ENCODE measurements at regions of chr7 and their contacts with region 1.

Region 1: DNA sequence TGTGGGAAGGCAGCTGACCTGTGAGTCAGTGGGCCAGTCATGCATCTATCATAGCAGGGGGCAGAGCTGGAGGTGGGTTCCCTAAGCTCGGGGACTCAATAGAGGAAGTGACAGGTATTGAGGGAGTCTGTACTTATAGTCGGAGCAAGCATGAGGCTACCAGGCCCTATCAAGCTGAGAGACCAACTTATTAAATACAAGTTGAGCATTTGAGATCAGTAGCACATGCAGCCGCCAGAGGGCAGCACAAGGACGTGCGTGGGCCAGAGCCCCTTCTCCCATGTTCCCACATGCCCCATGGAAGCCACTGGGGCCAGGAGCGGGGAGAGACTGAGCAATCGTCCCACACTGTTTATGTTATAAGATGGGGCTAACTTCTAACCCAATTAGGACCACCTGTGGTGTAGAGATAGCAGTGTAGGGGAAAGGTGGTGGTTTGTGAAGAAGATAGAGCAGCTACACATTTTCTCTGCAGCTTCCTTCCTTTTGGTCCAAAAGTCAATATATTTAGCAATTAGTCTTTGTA is 13.0 kb upstream of the STK31 start:
- DNase-seq: peak in 8 of 9 experiments; percentile 28 to 71 (median 60)
- ATAC-seq: peak; percentile 65
- H3K4me3 ChIP-seq: no peak overlapping the region
- H3K4me3 Mint-ChIP-seq: no peak overlapping the region
- H3K27ac ChIP-seq: no peak overlapping the region
- H3K27ac Mint-ChIP-seq: no peak overlapping the region
- H3K4me1 ChIP-seq: no peaks in the 10 kb centered on the region
- H3K4me1 Mint-ChIP-seq: no peaks in the 10 kb centered on the region
- H3K27me3 ChIP-seq: no peaks in the 10 kb centered on the region
- H3K27me3 Mint-ChIP-seq: no peaks in the 10 kb centered on the region
- CTCF ChIP-seq: peak; percentile 64

Region 2: GRCh38 chr7:22827563-22827962 is 869.4 kb before region 1 on chr7:
- CTCF ChIA-PET with region 1: no interaction called
- POLR2A ChIA-PET with region 1: no interaction called
- intact Hi-C with region 1: no loop called
- DNase-seq: peak in 1 of 9 experiments; percentile 18
- ATAC-seq: no peak
- H3K4me3 ChIP-seq: no peak overlapping the region
- H3K4me3 Mint-ChIP-seq: no peak overlapping the region
- H3K27ac ChIP-seq: no peak overlapping the region
- H3K27ac Mint-ChIP-seq: no peak overlapping the region
- H3K4me1 ChIP-seq: no peaks in the 10 kb centered on the region
- H3K4me1 Mint-ChIP-seq: peaks cover 6% of the 10 kb centered on the region
- H3K27me3 ChIP-seq: no peaks in the 10 kb centered on the region
- H3K27me3 Mint-ChIP-seq: peaks cover 7% of the 10 kb centered on the region
- CTCF ChIP-seq: no peak

Region 3: DNA sequence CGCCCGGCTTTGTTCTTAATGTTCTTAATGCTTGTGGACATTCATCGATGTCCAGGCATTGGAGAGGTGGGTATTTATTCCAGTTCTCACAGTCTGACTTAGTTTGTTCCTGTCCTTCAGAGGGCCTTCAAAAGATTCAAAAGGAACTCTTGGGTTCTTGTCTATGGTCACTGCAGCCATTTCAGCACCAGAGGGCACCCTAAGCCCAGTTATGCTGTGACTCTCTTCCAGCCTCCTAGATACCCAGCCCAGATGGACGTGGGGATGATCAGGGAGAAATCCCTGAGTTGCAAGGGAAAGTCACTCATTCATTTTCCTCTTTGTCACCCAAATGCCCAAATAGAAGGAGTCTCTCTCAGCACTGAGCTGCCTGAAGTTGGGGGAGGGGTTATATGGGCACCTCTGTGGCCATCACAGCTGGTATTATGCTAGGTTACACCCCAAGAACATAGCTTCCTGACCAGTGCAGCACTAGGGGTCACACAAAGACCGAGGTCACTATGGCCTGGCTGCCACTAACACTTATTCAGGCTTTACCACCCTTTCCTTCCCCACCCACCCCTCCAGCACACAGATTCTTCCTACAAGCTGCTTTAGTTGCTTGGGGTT is 126.3 kb before region 1 on chr7:
- CTCF ChIA-PET with region 1: interaction called, 11 read pairs
- POLR2A ChIA-PET with region 1: no interaction called
- intact Hi-C with region 1: no loop called
- DNase-seq: peak; percentile 40 to 81 (median 66)
- ATAC-seq: peak; percentile 83
- H3K4me3 ChIP-seq: no peak overlapping the region
- H3K4me3 Mint-ChIP-seq: no peak overlapping the region
- H3K27ac ChIP-seq: no peak overlapping the region
- H3K27ac Mint-ChIP-seq: no peak overlapping the region
- H3K4me1 ChIP-seq: no peaks in the 10 kb centered on the region
- H3K4me1 Mint-ChIP-seq: no peaks in the 10 kb centered on the region
- H3K27me3 ChIP-seq: no peaks in the 10 kb centered on the region
- H3K27me3 Mint-ChIP-seq: peaks cover 16% of the 10 kb centered on the region
- CTCF ChIP-seq: peak; percentile 67

Region 4: DNA sequence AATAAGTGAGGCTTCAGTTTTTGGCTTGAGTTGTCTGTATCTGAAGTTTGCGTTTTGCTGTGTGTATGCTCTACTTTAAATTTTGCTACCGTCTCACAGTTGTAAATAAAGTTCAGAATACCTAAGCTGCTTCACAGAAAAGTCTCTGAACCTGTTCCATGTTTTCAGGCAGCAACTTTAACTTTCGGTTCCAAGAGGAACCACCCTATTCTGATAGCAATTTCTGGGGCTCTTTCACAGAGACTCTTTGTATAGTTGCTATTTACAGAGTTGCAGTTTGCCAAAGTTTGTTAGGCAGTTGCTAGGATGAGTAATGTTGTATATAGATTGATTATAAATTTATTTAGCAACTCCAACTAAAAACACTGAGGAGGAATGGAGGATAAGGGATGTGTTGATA is 11.2 kb before region 1 on chr7:
- CTCF ChIA-PET with region 1: interaction called, 13 read pairs
- POLR2A ChIA-PET with region 1: interaction called, 5 read pairs
- intact Hi-C with region 1: no loop called
- DNase-seq: no peak
- ATAC-seq: no peak
- H3K4me3 ChIP-seq: no peak overlapping the region
- H3K4me3 Mint-ChIP-seq: no peak overlapping the region
- H3K27ac ChIP-seq: no peak overlapping the region
- H3K27ac Mint-ChIP-seq: peak overlapping the region; percentile 37
- H3K4me1 ChIP-seq: peaks cover 3% of the 10 kb centered on the region
- H3K4me1 Mint-ChIP-seq: peaks cover 11% of the 10 kb centered on the region
- H3K27me3 ChIP-seq: no peaks in the 10 kb centered on the region
- H3K27me3 Mint-ChIP-seq: no peaks in the 10 kb centered on the region
- CTCF ChIP-seq: no peak

Region 5: GRCh38 chr7:23717788-23718187 is 20.8 kb after region 1 on chr7:
- CTCF ChIA-PET with region 1: interaction called, 58 read pairs
- POLR2A ChIA-PET with region 1: no interaction called
- intact Hi-C with region 1: no loop called
- DNase-seq: no peak
- ATAC-seq: no peak
- H3K4me3 ChIP-seq: no peak overlapping the region
- H3K4me3 Mint-ChIP-seq: no peak overlapping the region
- H3K27ac ChIP-seq: no peak overlapping the region
- H3K27ac Mint-ChIP-seq: no peak overlapping the region
- H3K4me1 ChIP-seq: no peaks in the 10 kb centered on the region
- H3K4me1 Mint-ChIP-seq: no peaks in the 10 kb centered on the region
- H3K27me3 ChIP-seq: no peaks in the 10 kb centered on the region
- H3K27me3 Mint-ChIP-seq: no peaks in the 10 kb centered on the region
- CTCF ChIP-seq: no peak

Region 6: GRCh38 chr7:23751852-23752251 is 54.9 kb after region 1 on chr7:
- CTCF ChIA-PET with region 1: no interaction called
- POLR2A ChIA-PET with region 1: no interaction called
- intact Hi-C with region 1: no loop called
- DNase-seq: no peak
- ATAC-seq: no peak
- H3K4me3 ChIP-seq: no peak overlapping the region
- H3K4me3 Mint-ChIP-seq: no peak overlapping the region
- H3K27ac ChIP-seq: no peak overlapping the region
- H3K27ac Mint-ChIP-seq: no peak overlapping the region
- H3K4me1 ChIP-seq: no peaks in the 10 kb centered on the region
- H3K4me1 Mint-ChIP-seq: no peaks in the 10 kb centered on the region
- H3K27me3 ChIP-seq: no peaks in the 10 kb centered on the region
- H3K27me3 Mint-ChIP-seq: no peaks in the 10 kb centered on the region
- CTCF ChIP-seq: no peak

Region 7: GRCh38 chr7:23956772-23957556 is 260.0 kb after region 1 on chr7:
- CTCF ChIA-PET with region 1: no interaction called
- POLR2A ChIA-PET with region 1: no interaction called
- intact Hi-C with region 1: no loop called
- DNase-seq: no peak
- ATAC-seq: no peak
- H3K4me3 ChIP-seq: no peak overlapping the region
- H3K4me3 Mint-ChIP-seq: no peak overlapping the region
- H3K27ac ChIP-seq: no peak overlapping the region
- H3K27ac Mint-ChIP-seq: no peak overlapping the region
- H3K4me1 ChIP-seq: no peaks in the 10 kb centered on the region
- H3K4me1 Mint-ChIP-seq: no peaks in the 10 kb centered on the region
- H3K27me3 ChIP-seq: no peaks in the 10 kb centered on the region
- H3K27me3 Mint-ChIP-seq: no peaks in the 10 kb centered on the region
- CTCF ChIP-seq: no peak

Measured in CD8-positive, alpha-beta T cell (primary cell).